ENCODE measurements at regions of chr1 and their contacts with region 1.

Region 1: GRCh38 chr1:90561911-90562310 is 155.2 kb downstream of the BARHL2 start:
- DNase-seq: peak; percentile 60 to 71
- H3K4me3 ChIP-seq: peak overlapping the region in 1 of 4 experiments; percentile 19; a peak in 2 of 8 replicates
- H3K27ac ChIP-seq: no peak overlapping the region
- H3K4me1 ChIP-seq: peaks cover 0 to 28% (median 18%) of the 10 kb centered on the region in 4 experiments; a peak in 6 of 7 replicates
- H3K27me3 ChIP-seq: peaks cover 10 to 28% (median 24%) of the 10 kb centered on the region in 4 experiments
- CTCF ChIP-seq: peak in 2 of 3 experiments; percentile 2 to 37; a peak in 3 of 4 replicates
- EP300 ChIP-seq: peak in 1 of 2 experiments; percentile 56; a peak in 1 of 3 replicates
- POLR2A ChIP-seq: no peak
- RAD21 ChIP-seq: peak in 1 of 2 experiments; percentile 47; a peak in 1 of 4 replicates

Region 2: GRCh38 chr1:90340606-90341005 is 221.3 kb before region 1 on chr1:
- CTCF ChIA-PET with region 1: no interaction called
- POLR2A ChIA-PET with region 1: no interaction called
- DNase-seq: no peak
- H3K4me3 ChIP-seq: no peak overlapping the region
- H3K27ac ChIP-seq: no peak overlapping the region
- H3K4me1 ChIP-seq: no peaks in the 10 kb centered on the region
- H3K27me3 ChIP-seq: no peaks in the 10 kb centered on the region
- CTCF ChIP-seq: no peak
- EP300 ChIP-seq: no peak
- POLR2A ChIP-seq: no peak
- RAD21 ChIP-seq: no peak

Region 3: DNA sequence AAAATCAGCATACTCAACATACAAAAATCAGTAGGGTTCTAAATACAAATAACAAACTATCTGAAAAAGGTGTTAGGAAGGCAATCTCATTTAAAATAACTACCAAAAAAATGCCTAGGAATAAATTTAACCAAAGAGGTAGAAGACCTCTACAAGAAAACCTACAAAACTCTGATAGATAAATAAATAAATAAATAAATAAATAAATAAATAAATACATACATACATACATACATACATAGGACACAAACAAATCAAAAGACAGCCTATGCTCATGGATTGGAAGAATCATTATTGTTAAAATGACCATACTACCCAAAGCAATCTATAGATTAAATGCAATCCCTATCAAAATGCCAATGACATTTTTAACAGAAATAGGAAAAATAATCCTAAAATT is 39.5 kb before region 1 on chr1:
- CTCF ChIA-PET with region 1: no interaction called
- POLR2A ChIA-PET with region 1: no interaction called
- DNase-seq: no peak
- H3K4me3 ChIP-seq: no peak overlapping the region
- H3K27ac ChIP-seq: no peak overlapping the region
- H3K4me1 ChIP-seq: no peaks in the 10 kb centered on the region
- H3K27me3 ChIP-seq: no peaks in the 10 kb centered on the region
- CTCF ChIP-seq: no peak
- EP300 ChIP-seq: no peak
- POLR2A ChIP-seq: no peak
- RAD21 ChIP-seq: no peak

Region 4: GRCh38 chr1:90550626-90551406 is 11.1 kb before region 1 on chr1:
- CTCF ChIA-PET with region 1: interaction called, 16 read pairs
- POLR2A ChIA-PET with region 1: interaction called, 3 read pairs
- DNase-seq: peak; percentile 43 to 45
- H3K4me3 ChIP-seq: no peak overlapping the region
- H3K27ac ChIP-seq: no peak overlapping the region
- H3K4me1 ChIP-seq: no peaks in the 10 kb centered on the region
- H3K27me3 ChIP-seq: no peaks in the 10 kb centered on the region; a peak in 1 of 7 replicates
- CTCF ChIP-seq: peak; percentile 56 to 77 (median 57)
- EP300 ChIP-seq: no peak
- POLR2A ChIP-seq: no peak
- RAD21 ChIP-seq: peak; percentile 70 to 76

Region 5: GRCh38 chr1:90621986-90622385 is 60.1 kb after region 1 on chr1:
- CTCF ChIA-PET with region 1: no interaction called
- POLR2A ChIA-PET with region 1: no interaction called
- DNase-seq: no peak
- H3K4me3 ChIP-seq: no peak overlapping the region
- H3K27ac ChIP-seq: no peak overlapping the region
- H3K4me1 ChIP-seq: peaks cover 0 to 5% (median 4%) of the 10 kb centered on the region in 4 experiments; a peak in 3 of 7 replicates
- H3K27me3 ChIP-seq: no peaks in the 10 kb centered on the region
- CTCF ChIP-seq: no peak
- EP300 ChIP-seq: no peak
- POLR2A ChIP-seq: no peak
- RAD21 ChIP-seq: no peak